T-cell (primary cell): ENCODE measurements at regions of chr9 and their contacts with region 1.

Region 1: DNA sequence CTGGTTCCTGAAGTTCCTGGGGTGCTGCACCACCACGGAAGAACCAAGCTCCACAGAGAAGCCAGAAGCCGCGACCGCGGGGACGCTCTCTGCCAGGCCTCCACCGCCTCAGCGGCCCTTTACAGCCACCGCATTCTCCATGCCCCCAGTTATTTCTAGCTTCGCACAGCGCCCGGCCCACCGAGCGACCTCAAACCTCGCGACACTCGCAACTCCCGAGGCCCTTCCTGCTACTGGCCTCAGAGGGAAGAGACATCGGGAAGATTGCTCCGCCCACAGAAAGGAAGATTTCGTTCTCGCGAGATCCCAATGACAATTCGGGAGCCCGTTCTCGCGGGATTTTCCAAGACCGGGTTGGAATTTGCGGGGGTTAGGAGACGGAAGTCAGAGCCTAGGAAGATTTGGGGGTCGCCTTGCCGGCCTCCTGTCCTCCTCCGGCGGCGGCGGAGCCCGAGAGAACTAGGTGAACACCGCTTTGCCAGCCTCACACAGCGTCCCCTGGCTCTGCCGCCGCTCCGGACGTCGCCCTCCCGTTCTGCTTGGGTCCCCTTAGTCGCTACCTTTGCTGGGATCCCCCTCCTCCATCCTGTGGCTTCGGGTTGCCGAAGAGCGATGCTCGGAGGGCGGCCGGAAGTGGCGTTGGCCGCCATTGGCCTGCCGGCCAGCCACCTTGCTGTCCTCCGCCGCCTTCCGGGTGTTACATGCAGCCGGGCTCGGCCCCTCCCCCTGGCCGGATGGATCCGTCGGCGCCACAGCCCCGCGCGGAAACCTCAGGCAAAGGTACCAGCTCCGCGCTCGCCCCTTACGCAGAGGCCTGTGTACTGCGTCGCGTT is at the start of gene ERCC6L2:
- DNase-seq: peak; percentile 82 to 95 (median 89)
- ATAC-seq: peak; percentile 85 to 93 (median 92)
- H3K4me3 ChIP-seq: no peak within 1 kb of the TSS
- H3K4me3 Mint-ChIP-seq: no peak within 1 kb of the TSS
- H3K27ac ChIP-seq: no peak within 1 kb of the TSS
- H3K27ac Mint-ChIP-seq: no peak within 1 kb of the TSS
- H3K4me1 ChIP-seq: peaks cover 15 to 18% of the 10 kb centered on the region in 2 experiments
- H3K4me1 Mint-ChIP-seq: peaks cover 28 to 35% (median 32%) of the 10 kb centered on the region in 3 donors
- H3K27me3 ChIP-seq: no peaks in the 10 kb centered on the region
- H3K27me3 Mint-ChIP-seq: no peaks in the 10 kb centered on the region
- total RNA-seq, gene ERCC6L2: 46.8 to 58.3 (median 50.5) TPM

Region 2: DNA sequence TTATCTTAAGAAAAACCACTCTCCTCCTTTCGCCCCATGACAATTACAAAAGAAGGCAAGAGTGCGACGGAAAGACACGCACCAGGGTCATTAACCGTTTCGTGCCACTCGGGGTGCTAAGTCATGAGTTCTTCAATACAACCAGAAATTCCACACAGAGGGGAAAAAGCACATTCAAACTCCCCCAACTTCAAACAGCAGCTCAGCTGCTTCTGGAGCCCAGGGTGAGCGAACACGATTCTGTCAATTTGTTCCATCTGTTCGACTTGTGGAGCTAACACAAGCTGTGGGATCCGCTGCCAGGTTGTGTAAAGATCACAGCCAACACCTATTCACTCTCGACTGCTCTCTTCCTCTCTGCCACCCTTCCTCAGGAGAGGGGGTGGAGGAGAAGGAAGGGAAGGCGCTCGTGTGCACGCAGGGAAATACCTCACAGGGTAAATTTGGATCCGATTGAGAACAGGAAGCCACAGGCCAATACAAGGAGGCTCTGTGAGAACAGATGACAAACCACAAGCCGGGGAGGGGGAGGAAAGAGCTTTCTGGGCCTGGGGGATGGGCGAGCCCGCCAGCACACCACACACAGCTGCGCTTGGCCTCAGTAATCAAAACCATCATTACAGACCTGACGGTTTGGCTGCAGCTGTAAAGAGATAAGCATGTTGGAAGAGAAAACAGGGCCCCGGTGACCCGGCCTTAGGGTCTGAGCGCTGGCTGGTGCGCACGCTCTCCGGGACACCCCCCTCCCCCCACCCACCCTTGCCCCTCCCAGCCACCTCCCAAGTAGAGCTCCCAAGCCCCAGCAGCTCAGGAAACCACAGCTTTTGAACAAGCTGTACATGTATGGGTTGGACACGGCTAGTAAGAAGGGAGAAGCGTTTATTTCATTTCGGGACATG is 413.0 kb before region 1 on chr9:
- CTCF ChIA-PET with region 1: no interaction called
- POLR2A ChIA-PET with region 1: interaction called in 1 of 2 experiments, 10 read pairs
- DNase-seq: peak; percentile 36 to 89 (median 83)
- ATAC-seq: peak; percentile 95 to 98 (median 98)
- H3K4me3 ChIP-seq: peak overlapping the region; percentile 25 to 49
- H3K4me3 Mint-ChIP-seq: peak overlapping the region; percentile 68 to 72 (median 72)
- H3K27ac ChIP-seq: no peak overlapping the region
- H3K27ac Mint-ChIP-seq: peak overlapping the region; percentile 9 to 59
- H3K4me1 ChIP-seq: peaks cover 14 to 35% of the 10 kb centered on the region in 2 experiments
- H3K4me1 Mint-ChIP-seq: peaks cover 34 to 41% (median 36%) of the 10 kb centered on the region in 3 donors
- H3K27me3 ChIP-seq: peaks cover 0 to 3% of the 10 kb centered on the region in 2 experiments
- H3K27me3 Mint-ChIP-seq: peaks cover 3 to 4% of the 10 kb centered on the region in 2 donors

Region 3: DNA sequence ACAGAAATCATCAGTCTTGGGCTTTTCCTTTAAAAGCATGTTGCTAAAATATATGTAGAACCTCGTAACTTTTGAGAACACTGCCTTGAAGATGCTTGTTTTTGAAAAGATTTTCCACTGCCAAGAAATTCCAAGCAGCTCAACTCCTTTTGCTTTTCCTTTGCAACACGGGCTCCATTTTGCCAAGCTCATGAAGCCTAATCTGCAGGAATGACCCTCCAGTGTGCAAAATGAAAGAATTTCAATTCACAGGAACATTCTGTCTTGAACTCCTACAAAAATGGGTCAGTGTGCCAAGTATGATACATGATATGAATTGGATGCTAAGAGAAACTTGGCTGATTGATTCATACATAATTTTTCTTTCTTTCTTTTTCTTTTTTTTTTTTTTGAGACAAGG is 35.4 kb before region 1 on chr9:
- CTCF ChIA-PET with region 1: no interaction called
- POLR2A ChIA-PET with region 1: no interaction called
- DNase-seq: no peak
- ATAC-seq: no peak
- H3K4me3 ChIP-seq: no peak overlapping the region
- H3K4me3 Mint-ChIP-seq: no peak overlapping the region
- H3K27ac ChIP-seq: no peak overlapping the region
- H3K27ac Mint-ChIP-seq: no peak overlapping the region
- H3K4me1 ChIP-seq: no peaks in the 10 kb centered on the region
- H3K4me1 Mint-ChIP-seq: peaks cover 0 to 4% (median 0%) of the 10 kb centered on the region in 3 donors
- H3K27me3 ChIP-seq: no peaks in the 10 kb centered on the region
- H3K27me3 Mint-ChIP-seq: no peaks in the 10 kb centered on the region

Region 4: DNA sequence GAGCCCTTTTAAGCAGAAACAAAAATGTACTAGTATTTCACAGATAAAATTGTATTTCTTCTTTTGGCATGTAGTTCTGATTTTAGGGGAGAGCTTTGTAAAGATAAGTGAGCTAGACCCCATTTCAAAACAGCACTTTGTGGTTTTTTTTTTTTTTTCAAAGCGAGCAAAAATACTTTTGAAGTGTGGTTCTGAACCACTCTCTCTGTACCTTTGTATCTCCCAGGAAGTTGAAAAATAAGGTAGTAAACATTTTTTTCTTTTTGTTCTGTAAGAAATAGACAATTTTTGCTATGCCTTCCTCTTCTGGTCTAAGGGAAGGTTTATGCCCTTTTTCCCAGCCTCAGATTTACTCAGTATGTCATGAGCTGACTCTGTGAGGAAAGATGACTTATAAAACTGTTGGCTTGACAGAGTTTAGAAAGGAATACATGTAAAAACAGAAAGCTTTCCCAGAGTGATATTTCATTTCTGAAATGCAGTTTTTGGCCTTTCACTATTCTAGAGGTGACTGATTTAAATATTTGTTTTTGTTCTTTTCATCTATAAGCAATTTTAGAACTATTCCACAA is 12.5 kb after region 1 on chr9:
- CTCF ChIA-PET with region 1: interaction called, 3 to 5 read pairs
- POLR2A ChIA-PET with region 1: interaction called, 3 to 18 read pairs
- DNase-seq: peak in 1 of 35 experiments; percentile 47
- ATAC-seq: peak; percentile 75 to 91 (median 81)
- H3K4me3 ChIP-seq: peak overlapping the region in 1 of 2 donors; percentile 6
- H3K4me3 Mint-ChIP-seq: peak overlapping the region; percentile 57 to 65 (median 63)
- H3K27ac ChIP-seq: peak overlapping the region; percentile 57
- H3K27ac Mint-ChIP-seq: peak overlapping the region; percentile 92
- H3K4me1 ChIP-seq: peaks cover 23 to 46% of the 10 kb centered on the region in 2 experiments
- H3K4me1 Mint-ChIP-seq: peaks cover 72 to 83% (median 78%) of the 10 kb centered on the region in 3 donors
- H3K27me3 ChIP-seq: no peaks in the 10 kb centered on the region
- H3K27me3 Mint-ChIP-seq: no peaks in the 10 kb centered on the region

Region 5: GRCh38 chr9:95901506-95901905 is 26.0 kb after region 1 on chr9:
- CTCF ChIA-PET with region 1: no interaction called
- POLR2A ChIA-PET with region 1: interaction called, 3 to 10 read pairs
- DNase-seq: no peak
- ATAC-seq: no peak
- H3K4me3 ChIP-seq: no peak overlapping the region
- H3K4me3 Mint-ChIP-seq: no peak overlapping the region
- H3K27ac ChIP-seq: no peak overlapping the region
- H3K27ac Mint-ChIP-seq: no peak overlapping the region
- H3K4me1 ChIP-seq: peaks cover 0 to 1% of the 10 kb centered on the region in 2 experiments
- H3K4me1 Mint-ChIP-seq: peaks cover 37 to 43% (median 40%) of the 10 kb centered on the region in 3 donors
- H3K27me3 ChIP-seq: no peaks in the 10 kb centered on the region
- H3K27me3 Mint-ChIP-seq: no peaks in the 10 kb centered on the region